HepG2 (cell line): ENCODE measurements at regions of chr2 and their contacts with region 1.

Region 1: DNA sequence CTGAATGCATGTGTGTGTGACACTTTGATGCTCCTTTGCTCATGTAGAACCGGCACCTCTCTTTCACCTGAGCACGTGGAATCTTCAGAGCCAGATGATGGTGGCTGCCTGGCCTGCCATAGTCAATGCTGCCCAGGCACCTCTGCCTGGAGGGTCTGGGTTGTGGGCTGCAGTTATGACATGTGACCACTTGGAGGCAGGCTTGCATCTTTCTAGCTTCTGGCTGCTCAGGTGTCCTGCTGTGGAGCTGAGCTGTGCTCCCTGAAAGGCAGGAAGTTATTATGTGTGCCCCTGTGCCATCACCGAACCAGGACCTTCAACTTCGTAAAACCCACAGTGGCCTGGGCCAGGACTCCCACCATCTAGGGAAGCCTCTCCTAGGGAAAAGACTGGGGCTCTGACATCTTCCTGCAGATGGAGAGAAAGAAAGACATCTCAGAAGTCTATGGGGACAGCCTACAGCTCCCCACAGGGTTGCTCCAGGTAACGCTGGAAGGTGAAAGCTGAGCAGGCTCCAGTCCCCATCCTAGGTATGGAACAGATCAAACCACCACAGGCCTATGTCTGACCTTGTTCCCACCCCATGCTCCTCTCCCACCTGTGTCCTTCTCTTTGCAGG is 30.2 kb downstream of the PSD4 start:
- DNase-seq: peak; percentile 80
- ATAC-seq: peak; percentile 78
- H3K4me3 ChIP-seq: no peak overlapping the region
- H3K27ac ChIP-seq: no peak overlapping the region
- H3K4me1 ChIP-seq: peaks cover 69% of the 10 kb centered on the region
- H3K27me3 ChIP-seq: no peaks in the 10 kb centered on the region
- CTCF ChIP-seq: peak; percentile 100
- EP300 ChIP-seq: no peak
- POLR2A ChIP-seq: no peak
- RAD21 ChIP-seq: peak; percentile 98

Region 2: GRCh38 chr2:113219889-113220641 is 16.1 kb after region 1 on chr2:
- CTCF ChIA-PET with region 1: no interaction called
- POLR2A ChIA-PET with region 1: interaction called, 18 read pairs
- in situ Hi-C with region 1: no loop called
- intact Hi-C with region 1: no loop called
- DNase-seq: peak; percentile 85
- ATAC-seq: peak; percentile 72
- H3K4me3 ChIP-seq: peak overlapping the region; percentile 52 to 70 (median 60)
- H3K27ac ChIP-seq: peak overlapping the region; percentile 97
- H3K4me1 ChIP-seq: peaks cover 80% of the 10 kb centered on the region
- H3K27me3 ChIP-seq: no peaks in the 10 kb centered on the region; a peak in 1 of 5 replicates
- CTCF ChIP-seq: 0 out of 2 replicates have a peak, but pooled peaks have one; percentile 3
- EP300 ChIP-seq: peak in 1 of 2 experiments; percentile 61; a peak in 1 of 4 replicates
- POLR2A ChIP-seq: peak; percentile 77 to 96
- RAD21 ChIP-seq: no peak; the same call in 1 of the 2 replicates

Region 3: DNA sequence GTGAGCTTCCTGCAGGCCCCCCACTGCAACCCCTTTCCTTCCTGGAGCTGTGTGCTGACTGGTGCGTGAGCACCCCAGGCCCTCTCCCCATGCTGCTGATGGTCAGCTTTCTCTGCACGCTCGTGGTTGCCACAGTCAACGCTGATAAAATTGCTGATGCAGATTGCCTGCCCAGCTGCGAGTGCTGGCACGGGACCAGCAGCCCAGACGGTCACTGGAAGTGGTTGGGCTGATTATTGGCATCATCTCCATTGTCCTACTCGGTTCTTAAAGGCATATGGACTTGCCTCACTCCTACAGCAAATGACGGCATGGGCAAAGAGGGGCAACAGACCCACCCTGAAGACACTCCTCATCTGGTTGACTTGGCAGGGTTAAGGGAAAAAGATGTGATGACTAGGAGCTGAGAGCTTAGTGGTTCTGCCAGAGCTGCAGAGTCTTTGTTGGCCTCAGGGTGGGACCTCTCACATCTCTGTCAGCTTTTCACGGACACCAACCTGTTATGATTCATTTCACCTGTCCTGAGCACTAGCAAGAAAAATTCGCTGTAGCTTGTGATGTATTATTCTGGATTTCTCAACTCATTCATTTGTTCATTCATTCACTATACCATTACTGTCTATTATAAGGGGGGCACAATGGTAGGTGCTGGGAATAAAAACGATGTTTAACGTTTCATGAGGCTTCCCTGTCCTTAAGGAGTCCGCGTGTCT is 36.3 kb after region 1 on chr2:
- CTCF ChIA-PET with region 1: no interaction called
- POLR2A ChIA-PET with region 1: interaction called, 13 read pairs
- in situ Hi-C with region 1: loop called (anchors 5 kb)
- intact Hi-C with region 1: loop called (anchors 2 kb)
- DNase-seq: no peak
- ATAC-seq: peak; percentile 31
- H3K4me3 ChIP-seq: 0 out of 6 replicates have a peak overlapping the region, but pooled peaks of 1 of the 3 experiments have one; percentile 23
- H3K27ac ChIP-seq: no peak overlapping the region
- H3K4me1 ChIP-seq: peaks cover 68% of the 10 kb centered on the region
- H3K27me3 ChIP-seq: no peaks in the 10 kb centered on the region; a peak in 1 of 5 replicates
- CTCF ChIP-seq: no peak
- EP300 ChIP-seq: no peak
- POLR2A ChIP-seq: no peak
- RAD21 ChIP-seq: no peak

Region 4: DNA sequence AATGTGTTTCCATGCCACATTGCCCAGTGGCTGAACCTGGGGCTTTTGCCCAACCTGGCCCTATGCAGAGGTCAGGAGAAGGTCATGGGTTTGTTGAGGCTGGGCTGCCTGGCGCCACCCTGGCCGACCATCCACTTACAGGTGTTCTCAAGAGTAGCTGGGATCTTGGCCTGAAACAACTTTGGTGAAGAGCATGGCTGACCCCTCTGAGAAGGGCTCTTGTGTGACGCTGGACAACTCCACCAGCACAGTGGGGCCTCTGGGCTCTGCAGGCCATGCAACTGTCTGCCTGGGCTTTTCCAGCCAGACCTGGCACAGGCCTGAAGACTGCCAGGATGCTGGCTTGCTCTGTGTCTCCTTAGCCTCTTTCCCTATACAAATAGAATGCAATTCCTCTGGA is 157.0 kb after region 1 on chr2:
- CTCF ChIA-PET with region 1: no interaction called
- POLR2A ChIA-PET with region 1: no interaction called
- in situ Hi-C with region 1: loop called (anchors 5 kb)
- intact Hi-C with region 1: no loop called
- DNase-seq: no peak
- ATAC-seq: no peak
- H3K4me3 ChIP-seq: no peak overlapping the region
- H3K27ac ChIP-seq: no peak overlapping the region
- H3K4me1 ChIP-seq: no peaks in the 10 kb centered on the region
- H3K27me3 ChIP-seq: peaks cover 0 to 6% of the 10 kb centered on the region in 2 experiments; a peak in 1 of 5 replicates
- CTCF ChIP-seq: no peak
- EP300 ChIP-seq: no peak
- POLR2A ChIP-seq: no peak
- RAD21 ChIP-seq: no peak

Region 5: GRCh38 chr2:113390124-113390849 is 186.3 kb after region 1 on chr2:
- CTCF ChIA-PET with region 1: interaction called, 20 read pairs
- POLR2A ChIA-PET with region 1: no interaction called
- in situ Hi-C with region 1: no loop called
- intact Hi-C with region 1: loop called (anchors 5 kb)
- DNase-seq: peak; percentile 79
- ATAC-seq: peak; percentile 83
- H3K4me3 ChIP-seq: no peak overlapping the region
- H3K27ac ChIP-seq: no peak overlapping the region
- H3K4me1 ChIP-seq: no peaks in the 10 kb centered on the region
- H3K27me3 ChIP-seq: no peaks in the 10 kb centered on the region
- CTCF ChIP-seq: peak; percentile 96
- EP300 ChIP-seq: no peak
- POLR2A ChIP-seq: no peak
- RAD21 ChIP-seq: peak; percentile 86